ENCODE measurements at regions of chr1 and their contacts with region 1.

Region 1: GRCh38 chr1:40965529-40965928 is 14.0 kb upstream of the CTPS1 start:
- DNase-seq: no peak
- H3K4me3 ChIP-seq: no peak overlapping the region
- H3K27ac ChIP-seq: no peak overlapping the region
- H3K4me1 ChIP-seq: peaks cover 11% of the 10 kb centered on the region
- H3K27me3 ChIP-seq: no peaks in the 10 kb centered on the region
- CTCF ChIP-seq: no peak
- POLR2A ChIP-seq: no peak

Region 2: GRCh38 chr1:39754906-39755504 is 1210.5 kb before region 1 on chr1:
- intact Hi-C with region 1: loop called (anchors 5 kb)
- DNase-seq: peak in 1 of 2 donors; percentile 55
- H3K4me3 ChIP-seq: no peak overlapping the region
- H3K27ac ChIP-seq: no peak overlapping the region
- H3K4me1 ChIP-seq: no peaks in the 10 kb centered on the region
- H3K27me3 ChIP-seq: no peaks in the 10 kb centered on the region
- CTCF ChIP-seq: no peak
- POLR2A ChIP-seq: no peak

Measured in vagina (tissue), 2 donors.